IMR-90 (cell line): ENCODE measurements at regions of chr4 and their contacts with region 1.

Region 1: GRCh38 chr4:79413032-79413885 is 5.2 kb upstream of the GK2 start:
- DNase-seq: no peak
- ATAC-seq: no peak
- H3K4me3 ChIP-seq: no peak overlapping the region
- H3K27ac ChIP-seq: no peak overlapping the region
- H3K4me1 ChIP-seq: no peaks in the 10 kb centered on the region
- H3K27me3 ChIP-seq: no peaks in the 10 kb centered on the region
- CTCF ChIP-seq: no peak
- POLR2A ChIP-seq: no peak
- RAD21 ChIP-seq: no peak

Region 2: DNA sequence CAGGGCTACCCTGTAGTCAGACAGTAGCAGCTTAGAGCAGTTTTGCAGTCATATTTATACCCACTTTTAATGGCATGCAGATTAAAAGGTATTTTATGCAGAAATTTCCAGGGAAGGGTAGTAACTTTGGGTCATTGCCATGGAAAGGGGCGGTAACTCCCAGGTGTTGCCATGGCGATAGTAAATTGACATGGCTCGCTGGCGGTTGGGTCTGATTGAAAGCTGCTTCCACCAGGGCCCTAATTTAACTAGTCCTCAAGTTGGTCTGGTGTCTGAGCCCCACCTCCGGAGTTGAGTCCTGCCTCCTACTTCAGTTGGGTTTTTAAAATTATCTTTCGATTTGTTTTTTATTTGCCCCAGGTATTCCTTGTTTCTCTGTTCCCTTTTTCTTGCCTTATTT is 157.5 kb before region 1 on chr4:
- CTCF ChIA-PET with region 1: no interaction called
- POLR2A ChIA-PET with region 1: no interaction called
- dilution Hi-C with region 1: no loop called
- in situ Hi-C with region 1: no loop called
- intact Hi-C with region 1: no loop called
- DNase-seq: no peak
- ATAC-seq: no peak
- H3K4me3 ChIP-seq: no peak overlapping the region
- H3K27ac ChIP-seq: no peak overlapping the region
- H3K4me1 ChIP-seq: no peaks in the 10 kb centered on the region
- H3K27me3 ChIP-seq: no peaks in the 10 kb centered on the region
- CTCF ChIP-seq: no peak
- POLR2A ChIP-seq: no peak
- RAD21 ChIP-seq: no peak

Region 3: DNA sequence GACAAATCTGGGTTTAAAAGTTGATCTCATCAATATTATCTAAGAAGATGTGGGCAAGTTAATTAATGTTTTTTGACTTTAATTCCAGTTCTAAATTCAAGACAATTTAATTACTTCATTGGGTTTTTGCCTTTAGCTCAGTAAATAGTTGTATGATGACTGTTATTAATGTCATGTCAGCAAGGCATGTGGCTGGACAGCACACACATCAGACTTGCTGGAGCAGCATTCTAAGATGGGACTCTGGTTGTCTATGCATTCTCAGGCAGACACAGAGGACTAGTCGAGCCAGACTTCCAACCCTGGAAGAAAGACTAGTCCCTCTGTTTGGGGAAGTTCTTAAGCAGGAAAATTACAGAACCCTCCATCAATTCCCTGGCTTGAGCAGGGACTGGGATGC is 175.4 kb after region 1 on chr4:
- CTCF ChIA-PET with region 1: no interaction called
- POLR2A ChIA-PET with region 1: interaction called, 12 read pairs
- dilution Hi-C with region 1: no loop called
- in situ Hi-C with region 1: no loop called
- intact Hi-C with region 1: no loop called
- DNase-seq: peak; percentile 0
- ATAC-seq: peak; percentile 46; the same call in 1 of the 2 replicates
- H3K4me3 ChIP-seq: no peak overlapping the region
- H3K27ac ChIP-seq: no peak overlapping the region
- H3K4me1 ChIP-seq: no peaks in the 10 kb centered on the region
- H3K27me3 ChIP-seq: no peaks in the 10 kb centered on the region
- CTCF ChIP-seq: no peak
- POLR2A ChIP-seq: no peak
- RAD21 ChIP-seq: no peak

Region 4: DNA sequence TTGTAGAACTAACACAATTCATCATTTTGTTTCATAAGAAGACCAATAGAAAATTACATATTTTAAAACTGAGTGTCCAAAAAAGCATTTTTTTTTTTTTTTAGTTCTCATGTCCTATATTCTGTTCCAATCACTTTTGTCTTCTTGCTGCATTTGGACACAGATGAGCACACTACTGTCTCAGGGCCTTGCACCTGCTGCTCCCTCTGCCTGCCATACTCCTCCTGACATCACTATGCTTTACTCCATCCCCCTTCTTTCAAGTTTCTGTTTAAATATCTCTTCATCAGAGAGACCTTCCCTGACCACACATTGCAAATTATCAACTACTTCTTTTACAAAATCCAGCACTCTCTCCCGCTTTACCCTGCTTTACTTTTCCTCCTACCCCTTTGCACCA is 225.5 kb after region 1 on chr4:
- CTCF ChIA-PET with region 1: no interaction called
- POLR2A ChIA-PET with region 1: no interaction called
- dilution Hi-C with region 1: no loop called
- in situ Hi-C with region 1: no loop called
- intact Hi-C with region 1: no loop called
- DNase-seq: no peak
- ATAC-seq: no peak
- H3K4me3 ChIP-seq: no peak overlapping the region
- H3K27ac ChIP-seq: no peak overlapping the region
- H3K4me1 ChIP-seq: no peaks in the 10 kb centered on the region
- H3K27me3 ChIP-seq: no peaks in the 10 kb centered on the region
- CTCF ChIP-seq: no peak
- POLR2A ChIP-seq: no peak
- RAD21 ChIP-seq: no peak